ENCODE measurements at regions of chr12 and their contacts with region 1.

Region 1: DNA sequence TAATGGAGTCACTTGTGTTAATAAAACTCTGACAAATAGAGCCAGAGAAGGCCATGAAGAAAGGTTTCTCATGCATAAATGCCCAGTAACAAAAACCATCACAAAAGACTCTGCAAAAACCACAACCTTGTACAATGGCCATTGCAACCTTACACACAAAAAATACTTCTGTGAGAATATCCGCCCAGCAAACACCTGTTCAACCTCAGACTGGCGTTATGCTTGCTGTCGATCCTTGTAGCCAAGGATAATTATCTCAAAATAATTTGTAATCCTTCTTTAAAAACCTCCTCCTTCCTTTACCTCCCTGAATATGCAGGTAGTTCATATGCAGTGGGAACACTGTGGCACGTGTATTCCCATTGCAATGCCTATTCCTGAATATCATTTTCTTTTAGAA is 157.1 kb downstream of the SLC41A2 start:
- DNase-seq: no peak
- H3K4me3 Mint-ChIP-seq: no peak overlapping the region
- H3K27ac Mint-ChIP-seq: no peak overlapping the region
- H3K4me1 Mint-ChIP-seq: no peaks in the 10 kb centered on the region
- H3K27me3 Mint-ChIP-seq: peaks cover 25% of the 10 kb centered on the region

Region 2: GRCh38 chr12:104779134-104779533 is 21.9 kb before region 1 on chr12:
- intact Hi-C with region 1: loop called (anchors 2 kb)
- DNase-seq: no peak
- H3K4me3 Mint-ChIP-seq: no peak overlapping the region
- H3K27ac Mint-ChIP-seq: no peak overlapping the region
- H3K4me1 Mint-ChIP-seq: peaks cover 3% of the 10 kb centered on the region
- H3K27me3 Mint-ChIP-seq: peaks cover 19% of the 10 kb centered on the region

Measured in activated T-helper 2 cell treated with anti-CD3 and anti-CD28 coated beads, Interferon-gamma antibody, Interleukin-2, Interleukin-4, amounts not matched to agents 10 μg/mL and 5 μg/mL and 100 μg/mL, durations not matched to agents 14 hours and 24 hours and 36 hours (primary cell).